ACHN (cell line): ENCODE measurements at regions of chr16 and their contacts with region 1.

Region 1: DNA sequence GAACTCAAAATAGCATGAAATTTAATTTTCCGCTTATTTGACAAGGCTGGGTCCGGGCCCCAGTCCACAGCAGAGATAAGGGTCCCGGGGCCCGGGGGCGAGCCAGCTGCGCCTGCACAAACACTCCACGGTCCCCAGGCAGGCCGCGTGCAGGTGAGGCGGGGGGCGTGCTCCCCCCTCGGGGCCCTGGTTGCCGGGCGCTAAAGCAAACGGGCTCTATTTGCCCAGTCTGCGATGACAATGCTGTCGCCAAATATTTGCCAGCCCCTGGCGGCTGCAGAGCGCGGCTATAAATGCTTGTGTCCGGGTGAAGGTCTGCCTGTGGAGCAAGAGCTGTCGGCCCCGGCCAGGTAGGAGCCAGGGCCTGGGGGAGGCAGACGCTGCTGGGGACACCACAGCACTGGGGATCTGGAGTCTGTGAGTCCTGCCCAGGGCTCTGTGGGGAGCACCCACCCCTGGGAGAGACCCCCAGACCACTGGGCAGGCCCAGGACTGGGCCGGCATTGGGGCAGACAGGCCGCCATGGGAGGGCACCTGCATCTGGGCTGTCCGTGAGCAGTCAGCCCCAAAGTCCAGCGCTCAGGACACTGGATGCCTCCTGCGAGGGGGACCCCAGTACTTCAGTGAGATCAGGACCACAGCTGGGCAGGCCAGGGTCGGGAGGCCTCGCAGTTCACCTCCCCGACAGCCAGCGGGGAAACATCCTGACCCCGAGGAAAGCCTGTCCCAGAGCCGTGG is at the start of gene PERCC1:
- DNase-seq: no peak

Region 2: GRCh38 chr16:1320658-1321240 is 110.2 kb before region 1 on chr16:
- in situ Hi-C with region 1: no loop called
- DNase-seq: no peak

Region 3: DNA sequence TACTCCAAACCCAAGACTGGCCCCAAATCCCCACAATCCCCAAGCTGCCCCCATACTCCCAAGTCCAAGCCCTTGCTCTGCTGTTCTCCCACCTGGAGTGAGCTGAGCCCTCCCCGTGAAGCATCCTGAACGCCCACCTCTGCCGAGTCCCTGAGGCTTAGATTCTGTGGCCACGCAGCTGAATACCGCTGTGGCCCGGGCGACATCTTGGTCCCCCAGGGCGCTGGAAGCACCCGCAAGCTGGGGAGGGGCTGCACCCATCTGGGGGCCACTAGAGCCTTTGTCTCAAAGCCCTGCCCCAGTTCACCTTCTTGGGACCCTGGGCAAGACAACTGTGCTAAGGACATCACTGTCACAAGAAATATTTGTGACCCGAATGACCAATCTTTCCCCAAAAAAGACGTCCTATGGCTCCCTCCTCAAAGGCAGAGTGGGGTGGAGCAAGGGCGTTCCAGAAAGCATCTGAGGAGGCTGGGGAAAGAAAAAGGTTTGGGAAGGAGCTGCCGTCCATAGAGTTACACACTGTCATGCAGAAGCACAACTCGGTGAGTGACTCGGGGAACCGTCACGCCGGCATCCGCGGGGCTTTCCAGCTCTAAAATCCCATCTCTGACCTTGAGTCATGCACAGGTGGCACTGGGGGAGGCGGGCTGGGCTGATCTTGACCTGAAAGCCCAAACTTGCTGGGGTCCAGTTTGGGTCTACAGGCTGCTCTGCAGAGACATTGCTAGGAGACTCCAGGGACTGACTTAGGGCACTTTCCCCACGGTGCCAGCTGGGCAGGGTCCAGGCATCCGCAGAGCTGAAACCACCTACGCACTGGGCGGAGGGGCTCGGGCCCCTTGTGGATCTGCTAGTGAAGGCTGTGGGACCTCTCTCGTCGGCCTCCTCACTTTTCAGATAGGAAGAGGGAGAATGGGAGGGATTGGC is 51.2 kb after region 1 on chr16:
- in situ Hi-C with region 1: loop called (anchors 10 kb)
- DNase-seq: peak; percentile 79